Adrenal gland (tissue), 19 donors: ENCODE measurements at regions of chr11 and their contacts with region 1.

Region 1: GRCh38 chr11:2526808-2527381 is 82.1 kb downstream of the KCNQ1 start:
- DNase-seq: peak; percentile 62 to 76 (median 72)
- H3K4me3 ChIP-seq: no peak overlapping the region
- H3K27ac ChIP-seq: peak overlapping the region in 4 of 5 donors; percentile 60 to 82 (median 70)
- H3K4me1 ChIP-seq: peaks cover 45 to 59% of the 10 kb centered on the region in 2 donors
- H3K27me3 ChIP-seq: no peaks in the 10 kb centered on the region
- CTCF ChIP-seq: peak in 5 of 6 experiments; percentile 18 to 43 (median 23)
- POLR2A ChIP-seq: no peak

Region 2: GRCh38 chr11:2196970-2197770 is 329.7 kb before region 1 on chr11:
- intact Hi-C with region 1: loop called (anchors 10 kb)
- DNase-seq: peak; percentile 58 to 93 (median 82)
- H3K4me3 ChIP-seq: no peak overlapping the region
- H3K27ac ChIP-seq: no peak overlapping the region
- H3K4me1 ChIP-seq: no peaks in the 10 kb centered on the region
- H3K27me3 ChIP-seq: no peaks in the 10 kb centered on the region
- CTCF ChIP-seq: peak; percentile 71 to 94 (median 82)
- POLR2A ChIP-seq: no peak

Region 3: DNA sequence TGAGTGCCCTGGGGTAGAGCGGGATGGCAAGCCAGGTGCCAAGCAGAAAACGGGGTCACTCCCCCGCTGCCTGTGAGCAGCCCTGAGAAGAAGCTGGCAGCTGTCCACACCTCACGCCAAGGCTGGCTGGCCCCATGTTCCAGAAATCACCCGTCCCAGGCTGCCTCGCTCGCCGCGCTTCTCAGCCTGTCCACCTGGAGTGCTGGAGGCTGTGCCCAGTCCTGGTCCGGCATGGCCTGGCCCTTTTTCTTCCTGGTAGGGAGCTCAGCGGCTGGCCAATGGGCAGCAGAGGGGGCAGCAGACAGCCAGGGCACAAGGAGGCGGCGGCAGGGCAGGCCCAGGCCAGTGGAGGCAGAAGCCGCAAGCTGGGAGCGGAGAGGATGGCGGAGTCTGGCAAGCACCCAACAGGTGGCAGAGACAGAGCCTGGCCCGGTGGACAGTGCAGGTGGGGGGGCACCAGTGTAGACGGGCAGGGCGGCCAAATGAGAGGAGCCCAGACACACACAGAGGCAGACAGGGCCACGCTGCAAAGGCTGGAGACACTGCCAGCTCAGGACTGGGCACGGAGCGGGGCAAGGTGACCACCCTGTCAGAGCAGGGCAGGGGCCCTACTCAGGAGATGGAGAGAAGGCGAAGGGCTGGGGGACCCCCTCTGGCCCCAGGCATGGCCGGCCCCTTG is 318.1 kb before region 1 on chr11:
- intact Hi-C with region 1: loop called in 1 of 2 experiments (anchors 10 kb)
- DNase-seq: peak in 6 of 7 donors; percentile 13 to 52 (median 14)
- H3K4me3 ChIP-seq: no peak overlapping the region
- H3K27ac ChIP-seq: no peak overlapping the region
- H3K4me1 ChIP-seq: no peaks in the 10 kb centered on the region
- H3K27me3 ChIP-seq: peaks cover 3% of the 10 kb centered on the region
- CTCF ChIP-seq: no peak
- POLR2A ChIP-seq: no peak

Region 4: GRCh38 chr11:2305140-2305840 is 221.6 kb before region 1 on chr11:
- intact Hi-C with region 1: loop called (anchors 10 kb)
- DNase-seq: peak; percentile 78 to 94 (median 88)
- H3K4me3 ChIP-seq: no peak overlapping the region
- H3K27ac ChIP-seq: peak overlapping the region in 3 of 5 donors; percentile 19 to 83 (median 70)
- H3K4me1 ChIP-seq: peaks cover 0 to 27% of the 10 kb centered on the region in 2 donors
- H3K27me3 ChIP-seq: no peaks in the 10 kb centered on the region
- CTCF ChIP-seq: peak; percentile 80 to 96 (median 92)
- POLR2A ChIP-seq: no peak

Region 5: DNA sequence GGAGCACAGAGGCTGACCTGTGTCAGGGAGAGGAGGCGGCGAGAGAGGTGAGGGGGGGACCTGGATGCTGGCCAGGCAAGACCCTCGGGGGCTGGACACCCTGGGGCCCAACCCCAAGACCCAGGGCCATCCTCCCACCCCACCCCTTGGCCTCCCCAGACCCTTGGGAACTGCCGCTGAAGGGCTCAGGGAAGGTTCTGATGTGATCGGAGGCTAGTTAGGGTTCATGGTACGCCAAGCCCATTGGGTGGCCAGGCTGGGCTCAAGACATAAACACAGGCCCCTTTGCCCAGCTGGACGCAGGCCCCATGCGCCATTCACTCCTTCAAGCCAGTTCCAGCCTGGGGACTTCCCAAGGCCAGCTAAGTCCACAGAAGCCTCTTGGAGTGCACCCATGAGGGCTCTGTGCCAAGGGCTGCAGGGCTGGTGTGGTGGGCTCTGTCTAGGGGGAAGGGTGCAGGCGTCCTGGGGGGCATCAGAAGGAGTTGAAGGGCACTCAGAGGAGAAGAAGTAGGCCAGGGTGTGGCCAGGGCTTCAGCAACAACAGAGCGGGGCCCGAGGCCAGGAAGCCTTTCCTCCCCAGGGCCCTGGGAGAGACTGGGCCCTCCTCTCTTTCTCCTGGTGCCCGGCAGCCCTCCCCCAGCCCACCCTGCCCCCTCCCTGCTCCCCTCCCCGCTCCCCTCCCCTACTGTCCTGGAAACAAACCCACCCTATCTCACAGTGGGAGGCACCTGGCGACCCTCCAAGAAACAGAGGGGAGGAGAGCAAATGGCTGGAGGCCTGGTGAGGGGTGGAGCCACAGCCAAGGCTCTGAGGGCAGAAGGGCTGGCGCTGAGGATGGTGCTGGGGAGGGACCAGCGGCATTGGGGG is 212.1 kb before region 1 on chr11:
- intact Hi-C with region 1: loop called (anchors 10 kb)
- DNase-seq: peak; percentile 65 to 85 (median 82)
- H3K4me3 ChIP-seq: no peak overlapping the region
- H3K27ac ChIP-seq: peak overlapping the region in 2 of 5 donors; percentile 47 to 74
- H3K4me1 ChIP-seq: peaks cover 9 to 14% of the 10 kb centered on the region in 2 donors
- H3K27me3 ChIP-seq: no peaks in the 10 kb centered on the region
- CTCF ChIP-seq: no peak
- POLR2A ChIP-seq: no peak

Region 6: GRCh38 chr11:2428322-2428795 is 98.5 kb before region 1 on chr11:
- intact Hi-C with region 1: loop called (anchors 1 to 2 kb)
- DNase-seq: peak; percentile 80 to 93 (median 87)
- H3K4me3 ChIP-seq: no peak overlapping the region
- H3K27ac ChIP-seq: no peak overlapping the region
- H3K4me1 ChIP-seq: no peaks in the 10 kb centered on the region
- H3K27me3 ChIP-seq: no peaks in the 10 kb centered on the region
- CTCF ChIP-seq: peak; percentile 83 to 99 (median 96)
- POLR2A ChIP-seq: no peak

Region 7: GRCh38 chr11:2444821-2445745 is 81.8 kb before region 1 on chr11 and contains the start of gene KCNQ1:
- intact Hi-C with region 1: loop called (anchors 5 kb)
- DNase-seq: peak in 6 of 7 donors; percentile 69 to 90 (median 79)
- H3K4me3 ChIP-seq: peak within 1 kb of the TSS; percentile 34 to 88 (median 76)
- H3K27ac ChIP-seq: peak within 1 kb of the TSS; percentile 34 to 91 (median 73)
- H3K4me1 ChIP-seq: peaks cover 41 to 42% of the 10 kb centered on the region in 2 donors
- H3K27me3 ChIP-seq: no peaks in the 10 kb centered on the region
- CTCF ChIP-seq: peak in 2 of 6 experiments; percentile 27 to 29
- POLR2A ChIP-seq: peak; percentile 88 to 93
- total RNA-seq, gene KCNQ1: 11.0 to 447 (median 353) TPM